ENCODE measurements at regions of chr2 and their contacts with region 1.

Region 1: GRCh38 chr2:201158111-201158929 is 24.6 kb upstream of the CASP10 start:
- DNase-seq: peak; percentile 80
- H3K4me3 Mint-ChIP-seq: no peak overlapping the region
- H3K27ac Mint-ChIP-seq: peak overlapping the region; percentile 78
- H3K4me1 Mint-ChIP-seq: peaks cover 13% of the 10 kb centered on the region
- H3K27me3 Mint-ChIP-seq: no peaks in the 10 kb centered on the region

Region 2: DNA sequence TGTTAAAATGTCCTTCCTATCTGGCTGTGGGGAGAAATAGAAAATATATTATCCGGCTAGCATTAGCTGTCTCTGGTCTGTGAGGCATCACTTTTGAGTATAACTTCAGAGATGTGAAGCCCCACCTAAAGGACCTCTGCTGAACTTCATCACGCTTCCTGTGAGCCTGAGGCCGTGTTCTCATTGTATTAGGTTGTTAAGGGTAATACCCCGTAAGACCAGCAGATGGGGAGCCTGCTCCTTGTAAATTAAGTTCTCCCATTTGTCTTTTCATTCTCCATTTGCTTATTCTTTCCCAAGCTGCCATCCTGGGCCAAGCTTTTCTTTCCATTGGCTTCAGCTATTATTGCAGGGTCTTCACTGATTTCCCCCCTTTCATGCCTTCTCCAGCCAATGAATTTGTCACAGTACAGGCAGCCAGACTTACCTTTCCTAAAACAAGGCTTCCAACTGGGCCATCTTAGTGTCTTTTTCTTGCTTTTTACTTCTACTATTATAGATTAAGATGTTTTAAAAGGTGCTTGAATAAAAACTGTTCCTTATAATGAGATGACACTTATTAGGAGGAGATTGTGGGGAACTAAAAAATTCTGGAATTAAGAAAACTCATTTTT is 256.8 kb before region 1 on chr2:
- CTCF ChIA-PET with region 1: interaction called, 44 read pairs
- DNase-seq: peak; percentile 84
- H3K4me3 Mint-ChIP-seq: no peak overlapping the region
- H3K27ac Mint-ChIP-seq: peak overlapping the region; percentile 75
- H3K4me1 Mint-ChIP-seq: peaks cover 11% of the 10 kb centered on the region
- H3K27me3 Mint-ChIP-seq: no peaks in the 10 kb centered on the region

Region 3: GRCh38 chr2:201118121-201118960 is 40.0 kb before region 1 on chr2:
- CTCF ChIA-PET with region 1: interaction called, 51 read pairs
- DNase-seq: peak; percentile 92
- H3K4me3 Mint-ChIP-seq: peak overlapping the region; percentile 84
- H3K27ac Mint-ChIP-seq: peak overlapping the region; percentile 100
- H3K4me1 Mint-ChIP-seq: peaks cover 64% of the 10 kb centered on the region
- H3K27me3 Mint-ChIP-seq: peaks cover 7% of the 10 kb centered on the region

Region 4: GRCh38 chr2:201130524-201131186 is 27.7 kb before region 1 on chr2:
- CTCF ChIA-PET with region 1: interaction called, 10 read pairs
- DNase-seq: peak; percentile 45
- H3K4me3 Mint-ChIP-seq: peak overlapping the region; percentile 63
- H3K27ac Mint-ChIP-seq: peak overlapping the region; percentile 97
- H3K4me1 Mint-ChIP-seq: peaks cover 77% of the 10 kb centered on the region
- H3K27me3 Mint-ChIP-seq: no peaks in the 10 kb centered on the region